ENCODE measurements at regions of chr15 and their contacts with region 1.

Region 1: GRCh38 chr15:22806156-22806555 is 19.7 kb downstream of the NIPA1 start:
- DNase-seq: no peak
- ATAC-seq: no peak
- H3K4me3 Mint-ChIP-seq: no peak overlapping the region
- H3K27ac Mint-ChIP-seq: peak overlapping the region; percentile 50
- H3K4me1 Mint-ChIP-seq: peaks cover 5% of the 10 kb centered on the region
- H3K27me3 Mint-ChIP-seq: no peaks in the 10 kb centered on the region
- CTCF ChIP-seq: no peak

Region 2: DNA sequence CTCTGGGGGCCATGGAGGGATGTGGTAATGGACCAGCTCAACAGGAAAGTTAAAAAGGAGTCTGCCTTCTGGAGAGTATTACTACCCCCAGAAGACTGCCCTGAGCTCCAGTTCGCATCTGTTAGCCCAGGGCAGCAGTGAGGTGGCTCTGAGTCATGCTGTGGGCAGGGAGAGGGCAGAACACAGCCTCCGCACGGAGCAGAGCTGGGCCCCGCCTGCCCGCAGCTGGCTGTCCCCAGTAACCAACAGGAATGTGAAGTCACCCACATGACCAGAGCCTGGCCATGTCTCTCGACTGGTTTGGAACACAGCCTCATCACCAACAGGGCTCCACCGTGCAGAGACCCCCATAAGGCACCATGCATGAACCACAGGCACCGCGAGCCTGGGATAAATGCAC is 111.9 kb after region 1 on chr15:
- CTCF ChIA-PET with region 1: no interaction called
- POLR2A ChIA-PET with region 1: no interaction called
- DNase-seq: no peak
- ATAC-seq: no peak
- H3K4me3 Mint-ChIP-seq: no peak overlapping the region
- H3K27ac Mint-ChIP-seq: no peak overlapping the region
- H3K4me1 Mint-ChIP-seq: peaks cover 3% of the 10 kb centered on the region; the same call in 1 of the 2 replicates
- H3K27me3 Mint-ChIP-seq: no peaks in the 10 kb centered on the region
- CTCF ChIP-seq: no peak

Region 3: DNA sequence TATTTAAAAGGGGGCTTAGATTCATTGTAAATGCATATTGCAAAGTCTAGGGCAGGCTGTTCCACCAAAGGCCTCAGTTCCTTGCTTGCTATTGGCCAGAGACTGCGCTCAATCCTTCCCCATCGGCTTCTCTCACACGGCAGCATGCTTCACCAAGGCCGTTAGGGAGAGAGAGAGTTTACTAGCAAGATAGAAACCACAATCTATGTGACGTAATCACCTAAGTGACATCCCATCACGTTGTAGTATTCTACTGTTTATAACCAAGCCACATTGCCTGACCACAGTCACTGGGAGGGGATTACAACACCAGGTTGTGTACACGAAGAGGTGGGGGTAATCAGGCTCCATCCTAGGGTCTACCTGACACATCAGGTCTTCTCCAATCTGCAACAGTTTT is 1853.5 kb after region 1 on chr15:
- CTCF ChIA-PET with region 1: no interaction called
- POLR2A ChIA-PET with region 1: interaction called, 10 read pairs
- DNase-seq: no peak
- ATAC-seq: no peak
- H3K4me3 Mint-ChIP-seq: no peak overlapping the region
- H3K27ac Mint-ChIP-seq: no peak overlapping the region
- H3K4me1 Mint-ChIP-seq: no peaks in the 10 kb centered on the region
- H3K27me3 Mint-ChIP-seq: peaks cover 4% of the 10 kb centered on the region; the same call in 1 of the 2 replicates
- CTCF ChIP-seq: no peak

Measured in WTC11 (cell line).